ENCODE measurements at regions of chr5 and their contacts with region 1.

Region 1: DNA sequence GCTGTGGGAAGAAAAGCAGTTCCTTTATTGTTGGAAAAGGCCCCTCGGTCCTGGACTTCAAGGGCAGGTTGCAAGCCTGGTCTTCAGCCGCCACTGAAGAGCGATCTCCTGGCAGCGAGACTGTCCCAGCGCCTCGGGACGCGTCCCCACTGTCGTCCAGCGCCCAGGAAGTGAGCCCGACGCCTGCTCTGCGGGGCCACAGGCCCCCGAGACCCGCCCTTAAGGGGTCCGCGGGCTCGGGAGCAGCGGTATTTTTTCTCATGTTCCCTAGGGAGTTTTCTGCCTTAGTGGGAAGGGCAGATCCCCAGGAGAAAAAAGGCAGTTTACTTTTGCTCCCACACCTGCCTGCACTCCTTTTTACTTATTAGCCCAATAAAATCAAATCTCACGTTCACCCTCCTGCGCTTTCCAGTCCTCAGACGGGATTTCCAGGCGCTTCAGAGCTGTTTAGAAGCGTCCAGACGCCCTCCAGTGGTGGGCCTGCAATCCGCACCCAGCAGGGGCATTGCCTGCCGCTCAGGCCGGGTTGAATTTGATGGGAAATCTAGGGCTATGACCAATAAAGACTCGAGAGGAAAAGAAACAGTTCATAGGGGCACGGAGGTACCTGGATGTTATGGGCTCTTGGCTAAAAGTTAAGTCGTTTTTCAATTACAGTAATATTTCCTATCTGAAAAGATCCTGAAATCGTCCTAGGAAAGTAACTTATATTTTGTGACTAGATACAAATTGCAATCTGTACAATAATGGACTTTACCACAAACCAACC is 2.8 kb upstream of the EFNA5 start:
- DNase-seq: peak; percentile 66
- ATAC-seq: peak; percentile 97
- H3K4me3 ChIP-seq: peak overlapping the region; percentile 42 to 71 (median 49)
- H3K27ac ChIP-seq: no peak overlapping the region
- H3K4me1 ChIP-seq: peaks cover 15% of the 10 kb centered on the region
- H3K27me3 ChIP-seq: peaks cover 0 to 35% of the 10 kb centered on the region in 2 experiments; a peak in 4 of 5 replicates
- CTCF ChIP-seq: peak; percentile 90
- EP300 ChIP-seq: no peak
- POLR2A ChIP-seq: no peak
- RAD21 ChIP-seq: peak; percentile 67

Region 2: GRCh38 chr5:106269252-106269843 is 1404.2 kb before region 1 on chr5:
- CTCF ChIA-PET with region 1: no interaction called
- POLR2A ChIA-PET with region 1: no interaction called
- in situ Hi-C with region 1: no loop called
- intact Hi-C with region 1: loop called (anchors 5 kb)
- DNase-seq: peak; percentile 1
- ATAC-seq: peak; percentile 61; the same call in 2 of the 3 replicates
- H3K4me3 ChIP-seq: no peak overlapping the region
- H3K27ac ChIP-seq: no peak overlapping the region
- H3K4me1 ChIP-seq: no peaks in the 10 kb centered on the region
- H3K27me3 ChIP-seq: no peaks in the 10 kb centered on the region
- CTCF ChIP-seq: peak; percentile 32
- EP300 ChIP-seq: no peak
- POLR2A ChIP-seq: no peak
- RAD21 ChIP-seq: no peak

Region 3: DNA sequence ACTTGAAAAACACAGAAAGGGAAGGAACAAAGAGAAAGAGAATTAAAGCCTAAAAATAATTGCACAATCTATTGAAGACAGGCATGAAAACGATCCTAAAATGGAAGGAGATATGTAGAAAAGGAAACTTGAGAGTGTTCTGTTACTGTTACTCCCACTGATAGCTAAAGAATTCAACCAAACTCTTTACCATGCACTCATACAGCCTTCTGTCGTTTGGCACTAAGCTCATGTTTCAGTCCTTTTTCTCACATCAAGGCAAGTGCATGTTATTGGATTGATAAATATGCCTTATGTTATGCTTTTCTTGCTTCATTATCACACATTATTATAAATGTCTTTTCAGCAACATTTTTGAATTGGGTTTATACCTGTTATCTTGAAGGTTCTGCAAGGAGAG is 699.3 kb before region 1 on chr5:
- CTCF ChIA-PET with region 1: no interaction called
- POLR2A ChIA-PET with region 1: no interaction called
- in situ Hi-C with region 1: no loop called
- intact Hi-C with region 1: no loop called
- DNase-seq: no peak
- ATAC-seq: no peak
- H3K4me3 ChIP-seq: no peak overlapping the region
- H3K27ac ChIP-seq: no peak overlapping the region
- H3K4me1 ChIP-seq: no peaks in the 10 kb centered on the region
- H3K27me3 ChIP-seq: no peaks in the 10 kb centered on the region
- CTCF ChIP-seq: no peak
- EP300 ChIP-seq: no peak
- POLR2A ChIP-seq: no peak
- RAD21 ChIP-seq: no peak

Region 4: DNA sequence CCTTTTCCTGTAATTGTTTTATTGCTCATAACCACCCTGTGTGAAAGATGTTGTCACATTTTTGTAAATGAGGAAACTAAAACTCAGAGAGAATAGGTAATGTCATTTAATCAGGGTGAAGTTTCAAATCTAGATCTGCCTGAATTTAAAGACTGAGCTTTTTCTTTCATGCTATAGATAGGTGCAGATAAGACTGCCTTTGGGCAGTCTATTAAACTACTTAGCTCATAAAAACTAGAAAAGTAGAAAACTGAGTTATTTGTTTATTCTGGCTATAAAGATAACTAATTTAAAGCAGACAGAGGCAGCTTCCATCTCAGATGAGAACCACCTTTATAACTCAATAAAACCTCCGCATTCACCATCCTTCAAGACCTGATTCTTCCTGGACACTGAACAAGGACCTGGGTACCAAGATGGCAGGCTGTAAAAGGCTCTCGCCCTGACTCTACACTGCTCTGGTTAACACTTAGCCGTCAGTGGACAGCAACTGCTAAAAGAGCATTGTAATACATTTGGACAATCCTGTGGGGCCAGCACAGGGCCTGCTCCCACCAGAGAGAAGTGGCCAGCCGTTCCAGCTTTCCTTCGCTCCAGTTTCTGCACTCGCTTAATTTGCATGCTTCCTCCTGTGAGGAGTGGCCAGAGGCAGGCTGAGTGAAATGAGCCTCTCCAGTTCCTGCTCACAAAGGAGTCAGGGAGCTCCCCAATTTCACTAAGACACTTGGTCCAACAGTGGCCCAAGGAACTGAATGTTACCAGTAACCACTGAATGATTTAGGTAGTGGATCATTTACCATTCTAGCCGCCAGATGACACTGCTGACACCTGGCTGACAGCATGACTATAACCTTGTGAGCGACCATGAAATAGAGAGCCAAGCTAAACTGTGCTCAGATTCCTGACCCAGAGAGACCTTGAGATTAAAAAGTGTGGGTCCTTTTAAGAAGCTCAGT is 569.2 kb before region 1 on chr5:
- CTCF ChIA-PET with region 1: no interaction called
- POLR2A ChIA-PET with region 1: no interaction called
- in situ Hi-C with region 1: no loop called
- intact Hi-C with region 1: loop called (anchors 1 kb)
- DNase-seq: no peak
- ATAC-seq: peak; percentile 81
- H3K4me3 ChIP-seq: no peak overlapping the region
- H3K27ac ChIP-seq: no peak overlapping the region
- H3K4me1 ChIP-seq: no peaks in the 10 kb centered on the region
- H3K27me3 ChIP-seq: no peaks in the 10 kb centered on the region
- CTCF ChIP-seq: peak; percentile 46
- EP300 ChIP-seq: no peak
- POLR2A ChIP-seq: no peak
- RAD21 ChIP-seq: no peak

Region 5: GRCh38 chr5:108093186-108093585 is 419.6 kb after region 1 on chr5:
- CTCF ChIA-PET with region 1: no interaction called
- POLR2A ChIA-PET with region 1: no interaction called
- in situ Hi-C with region 1: no loop called
- intact Hi-C with region 1: loop called (anchors 1 kb)
- DNase-seq: no peak
- ATAC-seq: peak; percentile 53; the same call in 1 of the 3 replicates
- H3K4me3 ChIP-seq: no peak overlapping the region
- H3K27ac ChIP-seq: no peak overlapping the region
- H3K4me1 ChIP-seq: no peaks in the 10 kb centered on the region
- H3K27me3 ChIP-seq: no peaks in the 10 kb centered on the region
- CTCF ChIP-seq: no peak
- EP300 ChIP-seq: no peak
- POLR2A ChIP-seq: no peak
- RAD21 ChIP-seq: no peak

Region 6: GRCh38 chr5:108345541-108346171 is 672.1 kb after region 1 on chr5:
- CTCF ChIA-PET with region 1: no interaction called
- POLR2A ChIA-PET with region 1: no interaction called
- in situ Hi-C with region 1: no loop called
- intact Hi-C with region 1: loop called (anchors 10 kb)
- DNase-seq: peak; percentile 43
- ATAC-seq: peak; percentile 65; the same call in 2 of the 3 replicates
- H3K4me3 ChIP-seq: no peak overlapping the region
- H3K27ac ChIP-seq: no peak overlapping the region
- H3K4me1 ChIP-seq: no peaks in the 10 kb centered on the region
- H3K27me3 ChIP-seq: no peaks in the 10 kb centered on the region
- CTCF ChIP-seq: peak; percentile 56
- EP300 ChIP-seq: no peak
- POLR2A ChIP-seq: no peak
- RAD21 ChIP-seq: 0 out of 2 replicates have a peak, but pooled peaks have one; percentile 19